ENCODE measurements at regions of chr1 and their contacts with region 1.

Region 1: GRCh38 chr1:57133686-57134085 is 167.9 kb upstream of the C8B start:
- DNase-seq: no peak
- H3K4me3 ChIP-seq: no peak overlapping the region
- H3K4me3 Mint-ChIP-seq: no peak overlapping the region
- H3K27ac ChIP-seq: no peak overlapping the region
- H3K27ac Mint-ChIP-seq: no peak overlapping the region
- H3K4me1 ChIP-seq: no peaks in the 10 kb centered on the region
- H3K4me1 Mint-ChIP-seq: no peaks in the 10 kb centered on the region
- H3K27me3 ChIP-seq: no peaks in the 10 kb centered on the region
- H3K27me3 Mint-ChIP-seq: peaks cover 0 to 2% (median 0%) of the 10 kb centered on the region in 3 donors
- CTCF ChIP-seq: no peak

Region 2: GRCh38 chr1:56216218-56216617 is 917.5 kb before region 1 on chr1:
- intact Hi-C with region 1: no loop called
- DNase-seq: no peak
- H3K4me3 ChIP-seq: no peak overlapping the region
- H3K4me3 Mint-ChIP-seq: no peak overlapping the region
- H3K27ac ChIP-seq: no peak overlapping the region
- H3K27ac Mint-ChIP-seq: no peak overlapping the region
- H3K4me1 ChIP-seq: no peaks in the 10 kb centered on the region
- H3K4me1 Mint-ChIP-seq: no peaks in the 10 kb centered on the region
- H3K27me3 ChIP-seq: no peaks in the 10 kb centered on the region
- H3K27me3 Mint-ChIP-seq: peaks cover 0 to 3% (median 2%) of the 10 kb centered on the region in 3 donors
- CTCF ChIP-seq: no peak

Region 3: DNA sequence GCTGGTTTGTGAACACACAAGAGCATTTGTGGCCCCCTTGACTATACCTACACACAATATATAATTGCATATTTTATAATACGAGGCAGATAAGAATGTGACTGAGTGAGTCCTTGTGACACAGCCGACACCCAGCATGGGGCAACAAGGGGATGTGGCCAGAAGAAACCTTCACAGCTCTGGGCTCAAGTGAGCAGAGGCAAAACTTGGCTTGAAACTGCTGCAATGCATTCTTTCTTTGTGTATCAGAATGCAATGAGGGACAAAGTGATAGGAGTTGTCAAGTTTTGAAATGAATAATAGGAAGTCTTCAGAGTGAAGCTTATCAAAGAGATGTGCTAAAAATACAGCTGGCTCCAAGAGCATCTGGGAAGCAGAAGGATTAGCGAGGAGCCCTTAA is 43.8 kb before region 1 on chr1:
- intact Hi-C with region 1: loop called in 1 of 2 experiments (anchors 2 kb)
- DNase-seq: no peak
- H3K4me3 ChIP-seq: no peak overlapping the region
- H3K4me3 Mint-ChIP-seq: no peak overlapping the region
- H3K27ac ChIP-seq: no peak overlapping the region
- H3K27ac Mint-ChIP-seq: no peak overlapping the region
- H3K4me1 ChIP-seq: no peaks in the 10 kb centered on the region
- H3K4me1 Mint-ChIP-seq: no peaks in the 10 kb centered on the region
- H3K27me3 ChIP-seq: no peaks in the 10 kb centered on the region
- H3K27me3 Mint-ChIP-seq: peaks cover 0 to 2% (median 0%) of the 10 kb centered on the region in 3 donors
- CTCF ChIP-seq: no peak

Measured in CD14-positive monocyte (primary cell).